ENCODE measurements at regions of chr9 and their contacts with region 1.

Region 1: DNA sequence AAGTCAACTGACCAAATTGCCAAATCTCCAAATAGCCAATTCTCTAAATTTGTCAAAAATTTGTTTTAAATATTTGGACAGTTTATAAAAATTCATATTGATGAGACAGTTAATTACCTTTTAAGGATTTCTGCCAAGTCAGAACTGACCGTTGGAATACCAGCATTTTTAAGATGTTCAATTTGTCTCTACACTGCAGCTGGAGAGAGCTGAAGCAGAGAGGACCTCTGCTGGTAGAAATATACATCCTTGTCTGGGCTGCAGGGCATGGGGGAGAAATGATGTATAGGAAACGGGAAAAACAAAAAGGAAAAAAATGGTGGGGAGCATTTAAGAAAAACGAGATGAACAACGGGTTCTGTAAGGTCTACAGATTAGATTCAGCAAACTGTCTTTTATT is 16.8 kb downstream of the NR6A1 start:
- DNase-seq: peak; percentile 66
- H3K4me3 ChIP-seq: no peak overlapping the region
- H3K27ac ChIP-seq: no peak overlapping the region
- H3K4me1 ChIP-seq: peaks cover 56% of the 10 kb centered on the region
- H3K27me3 ChIP-seq: no peaks in the 10 kb centered on the region
- CTCF ChIP-seq: peak; percentile 84

Region 2: GRCh38 chr9:124551472-124552272 is 202.6 kb before region 1 on chr9:
- CTCF ChIA-PET with region 1: no interaction called
- POLR2A ChIA-PET with region 1: no interaction called
- intact Hi-C with region 1: loop called (anchors 5 kb)
- DNase-seq: peak; percentile 73
- H3K4me3 ChIP-seq: no peak overlapping the region
- H3K27ac ChIP-seq: no peak overlapping the region
- H3K4me1 ChIP-seq: peaks cover 3% of the 10 kb centered on the region
- H3K27me3 ChIP-seq: no peaks in the 10 kb centered on the region
- CTCF ChIP-seq: peak; percentile 88

Region 3: DNA sequence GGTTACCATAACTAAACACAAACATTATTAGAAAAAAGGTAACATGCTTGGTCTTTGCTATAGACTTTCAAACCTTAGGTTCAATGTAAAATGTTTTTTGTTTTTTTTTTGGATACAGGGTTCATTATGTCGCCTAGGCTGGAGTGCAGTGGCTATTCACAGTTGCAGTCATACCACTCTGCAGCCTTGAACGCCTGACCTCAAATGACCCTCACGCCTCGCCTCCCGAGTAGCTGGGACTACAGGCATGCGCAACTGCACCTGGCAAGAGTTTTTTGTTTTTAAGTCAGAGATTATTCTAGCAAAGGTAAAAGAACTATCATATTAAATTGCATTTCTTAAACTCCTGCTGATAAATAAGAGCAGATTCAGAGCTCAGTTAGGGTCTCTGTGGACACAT is 192.0 kb before region 1 on chr9:
- CTCF ChIA-PET with region 1: no interaction called
- POLR2A ChIA-PET with region 1: no interaction called
- intact Hi-C with region 1: no loop called
- DNase-seq: no peak
- H3K4me3 ChIP-seq: no peak overlapping the region
- H3K27ac ChIP-seq: no peak overlapping the region
- H3K4me1 ChIP-seq: peaks cover 5% of the 10 kb centered on the region
- H3K27me3 ChIP-seq: no peaks in the 10 kb centered on the region
- CTCF ChIP-seq: no peak

Measured in A673 (cell line).